BJ (cell line): ENCODE measurements at regions of chr13 and their contacts with region 1.

Region 1: DNA sequence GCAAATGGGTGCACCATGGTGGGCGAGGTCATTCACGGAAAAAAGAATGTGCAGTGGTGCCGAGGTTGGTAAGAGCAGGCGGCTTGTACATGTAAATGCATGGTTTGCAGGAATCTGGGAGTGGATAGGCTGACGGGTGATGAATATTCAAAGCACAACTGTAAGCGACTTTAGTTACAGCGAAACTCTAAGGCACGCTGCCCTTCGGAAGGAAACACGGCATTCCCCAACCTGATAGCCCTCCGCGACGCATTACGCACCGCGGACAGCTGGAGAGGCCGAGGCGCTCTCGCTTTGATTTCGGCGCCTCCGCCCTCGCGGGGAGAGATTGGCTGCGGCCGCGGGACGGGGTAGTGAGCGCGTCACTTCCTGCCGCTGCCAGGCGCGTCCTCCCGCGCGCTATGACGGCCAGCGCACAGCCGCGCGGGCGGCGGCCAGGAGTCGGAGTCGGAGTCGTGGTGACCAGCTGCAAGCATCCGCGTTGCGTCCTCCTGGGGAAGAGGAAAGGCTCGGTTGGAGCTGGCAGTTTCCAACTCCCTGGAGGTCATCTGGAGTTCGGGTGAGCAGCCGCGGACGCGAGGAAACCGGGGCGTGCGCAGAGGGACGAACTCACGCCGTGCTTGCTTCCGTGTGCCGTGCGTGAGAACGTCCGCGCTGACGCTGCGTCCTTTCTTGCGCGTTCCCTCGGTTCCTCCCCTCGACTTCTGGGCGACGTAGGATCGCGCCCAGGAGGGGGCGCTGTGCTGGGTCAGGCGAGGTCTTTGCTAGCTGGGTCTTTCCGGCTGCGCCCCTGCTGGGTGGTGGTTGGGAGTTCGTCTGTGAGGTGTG is at the start of gene NUDT15:
- DNase-seq: peak; percentile 61
- H3K4me3 ChIP-seq: peak within 1 kb of the TSS; percentile 77
- H3K27me3 ChIP-seq: no peaks in the 10 kb centered on the region
- CTCF ChIP-seq: peak; percentile 99
- polyA plus RNA-seq, gene NUDT15: 8.2 and 13.5 TPM in 2 replicates

Region 2: DNA sequence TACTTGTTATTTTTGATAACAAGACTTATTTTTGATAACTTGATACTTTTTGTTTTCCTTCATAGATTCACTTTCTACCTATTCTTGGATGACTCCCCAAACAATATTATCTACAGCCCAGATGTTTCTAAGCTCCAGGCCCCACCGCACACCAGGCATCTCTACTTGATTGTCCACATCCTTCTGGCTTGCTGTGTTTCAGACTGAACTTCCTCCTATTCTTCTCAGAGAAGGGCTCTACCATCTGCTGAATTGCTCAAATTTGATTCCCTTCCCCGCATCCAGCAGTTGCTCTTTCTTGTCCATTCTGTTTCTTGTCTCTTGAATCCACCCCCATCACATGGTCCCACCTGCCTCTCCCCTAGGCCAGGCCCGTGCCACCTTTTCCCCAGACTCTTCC is 13.0 kb after region 1 on chr13:
- CTCF ChIA-PET with region 1: interaction called, 38 read pairs
- POLR2A ChIA-PET with region 1: no interaction called
- DNase-seq: no peak
- H3K4me3 ChIP-seq: no peak overlapping the region
- H3K27me3 ChIP-seq: no peaks in the 10 kb centered on the region
- CTCF ChIP-seq: no peak

Region 3: DNA sequence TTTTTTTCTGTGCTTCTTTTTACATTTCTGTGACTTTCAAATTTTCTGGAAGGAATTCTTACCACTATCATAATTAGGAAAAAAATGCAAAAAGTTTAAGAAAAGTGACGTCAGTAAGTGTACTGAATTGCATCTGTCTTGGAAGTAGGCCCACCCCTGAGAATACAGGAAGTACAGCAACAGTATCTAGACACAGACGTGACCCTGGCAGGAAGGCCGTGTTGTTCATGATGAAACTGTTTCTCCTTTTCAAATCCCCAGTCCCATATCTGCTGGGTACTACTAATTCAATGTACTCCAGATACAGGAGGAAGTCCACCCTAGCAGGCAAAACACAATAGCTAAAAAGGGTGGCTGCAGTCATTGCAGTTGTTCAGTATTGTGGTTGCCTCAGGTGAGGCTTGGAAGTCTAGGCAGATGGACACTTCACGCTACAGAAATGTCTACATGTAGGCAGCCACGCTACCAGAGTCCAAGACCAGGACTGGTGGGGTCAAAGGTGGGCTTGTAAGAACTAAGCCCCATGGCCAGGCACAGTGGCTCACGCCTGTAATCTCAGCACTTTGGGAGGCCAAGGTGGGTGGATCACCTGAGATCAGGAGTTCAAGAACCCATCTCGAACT is 107.0 kb after region 1 on chr13:
- CTCF ChIA-PET with region 1: no interaction called
- POLR2A ChIA-PET with region 1: no interaction called
- DNase-seq: no peak
- H3K4me3 ChIP-seq: no peak overlapping the region
- H3K27me3 ChIP-seq: no peaks in the 10 kb centered on the region
- CTCF ChIP-seq: no peak